ENCODE measurements at regions of chr6 and their contacts with region 1.

Region 1: GRCh38 chr6:139600919-139601475 is 226.5 kb upstream of the CITED2 start:
- DNase-seq: no peak
- H3K4me3 Mint-ChIP-seq: no peak overlapping the region
- H3K27ac Mint-ChIP-seq: peak overlapping the region; percentile 10
- H3K4me1 Mint-ChIP-seq: peaks cover 7% of the 10 kb centered on the region
- H3K27me3 Mint-ChIP-seq: no peaks in the 10 kb centered on the region

Region 2: DNA sequence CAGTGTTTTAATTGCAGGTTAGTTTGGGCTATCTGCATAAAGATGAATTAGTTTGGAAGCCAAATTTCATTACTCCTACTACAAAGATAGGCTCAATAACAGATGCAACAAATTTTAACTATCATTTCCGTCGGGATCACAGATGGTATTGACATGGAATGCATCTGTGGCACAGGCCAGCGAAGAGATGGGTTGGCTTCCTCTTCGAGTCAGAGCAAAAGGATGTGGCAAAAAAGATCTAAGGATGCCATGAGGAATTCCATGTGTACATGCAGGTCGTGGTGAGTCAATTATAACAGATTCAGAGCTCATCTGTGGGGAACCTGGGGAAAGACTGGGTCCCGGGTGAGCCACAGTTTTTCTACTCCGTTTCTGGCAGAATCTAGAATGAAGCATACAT is 143.5 kb before region 1 on chr6:
- intact Hi-C with region 1: no loop called
- DNase-seq: no peak
- H3K4me3 Mint-ChIP-seq: no peak overlapping the region
- H3K27ac Mint-ChIP-seq: no peak overlapping the region
- H3K4me1 Mint-ChIP-seq: no peaks in the 10 kb centered on the region
- H3K27me3 Mint-ChIP-seq: peaks cover 4% of the 10 kb centered on the region

Region 3: GRCh38 chr6:139525415-139525814 is 75.6 kb before region 1 on chr6:
- intact Hi-C with region 1: loop called (anchors 5 kb)
- DNase-seq: no peak
- H3K4me3 Mint-ChIP-seq: no peak overlapping the region
- H3K27ac Mint-ChIP-seq: no peak overlapping the region
- H3K4me1 Mint-ChIP-seq: peaks cover 20% of the 10 kb centered on the region
- H3K27me3 Mint-ChIP-seq: peaks cover 2% of the 10 kb centered on the region

Region 4: GRCh38 chr6:139540276-139540675 is 60.7 kb before region 1 on chr6:
- intact Hi-C with region 1: loop called (anchors 5 kb)
- DNase-seq: peak; percentile 56
- H3K4me3 Mint-ChIP-seq: peak overlapping the region; percentile 38
- H3K27ac Mint-ChIP-seq: peak overlapping the region; percentile 73
- H3K4me1 Mint-ChIP-seq: peaks cover 66% of the 10 kb centered on the region
- H3K27me3 Mint-ChIP-seq: no peaks in the 10 kb centered on the region

Region 5: DNA sequence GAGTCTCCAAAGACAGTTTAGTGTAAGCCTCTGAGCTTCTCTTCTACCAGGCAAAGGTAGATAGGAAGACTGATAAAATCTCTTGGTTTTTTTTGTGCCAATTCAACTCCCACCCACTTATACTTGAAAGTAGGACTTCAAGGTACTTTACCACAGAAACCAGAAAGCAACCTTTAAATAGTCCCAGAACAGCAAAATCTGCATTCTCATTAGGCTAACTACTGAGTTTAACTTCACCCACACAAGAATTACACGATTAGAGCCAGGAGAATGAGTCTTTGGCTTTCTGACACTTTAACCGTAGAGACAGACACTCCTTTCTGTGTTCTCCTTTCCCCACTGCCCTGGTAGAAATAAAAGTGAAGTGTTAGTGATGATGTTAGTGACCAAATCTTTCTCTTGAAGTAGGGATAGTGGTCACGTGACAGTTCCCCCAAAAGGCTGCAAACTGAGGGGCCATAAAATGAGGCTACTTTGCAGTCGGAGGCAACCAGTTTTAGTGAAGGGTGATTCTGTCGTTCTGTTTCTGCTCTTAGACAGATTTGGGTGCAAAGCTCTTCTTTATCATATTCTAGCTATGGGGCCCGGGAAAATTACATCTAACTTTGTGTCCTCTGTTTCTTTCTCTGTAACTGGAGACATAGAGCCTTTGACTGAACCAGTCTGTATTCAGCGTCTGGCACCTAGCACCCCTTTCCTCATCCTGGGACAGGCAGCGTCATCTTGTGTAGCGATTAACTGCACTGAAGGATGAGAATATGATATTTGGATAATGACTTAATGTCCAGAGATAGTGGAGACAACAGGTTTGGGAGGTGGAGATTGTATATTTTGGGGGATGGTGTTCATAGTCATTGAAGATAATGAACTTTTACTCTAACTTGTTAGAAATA is 20.2 kb before region 1 on chr6:
- intact Hi-C with region 1: loop called (anchors 1 kb)
- DNase-seq: no peak
- H3K4me3 Mint-ChIP-seq: no peak overlapping the region
- H3K27ac Mint-ChIP-seq: peak overlapping the region; percentile 36
- H3K4me1 Mint-ChIP-seq: peaks cover 29% of the 10 kb centered on the region
- H3K27me3 Mint-ChIP-seq: peaks cover 8% of the 10 kb centered on the region

Region 6: GRCh38 chr6:139640448-139640847 is 39.5 kb after region 1 on chr6:
- intact Hi-C with region 1: no loop called
- DNase-seq: no peak
- H3K4me3 Mint-ChIP-seq: no peak overlapping the region
- H3K27ac Mint-ChIP-seq: no peak overlapping the region
- H3K4me1 Mint-ChIP-seq: no peaks in the 10 kb centered on the region
- H3K27me3 Mint-ChIP-seq: peaks cover 8% of the 10 kb centered on the region

Measured in activated T-helper 1 cell treated with anti-CD3 and anti-CD28 coated beads, Interleukin-12 subunit alpha, Interleukin-12 subunit beta, Interleukin-2, Interleukin-4 antibody, amounts not matched to agents 30 ng/mL and 10 ng/mL and 1 ng/mL, durations not matched to agents 14 hours and 24 hours and 36 hours (primary cell).